Mammary epithelial cell (primary cell): ENCODE measurements at regions of chrX and their contacts with region 1.

Region 1: DNA sequence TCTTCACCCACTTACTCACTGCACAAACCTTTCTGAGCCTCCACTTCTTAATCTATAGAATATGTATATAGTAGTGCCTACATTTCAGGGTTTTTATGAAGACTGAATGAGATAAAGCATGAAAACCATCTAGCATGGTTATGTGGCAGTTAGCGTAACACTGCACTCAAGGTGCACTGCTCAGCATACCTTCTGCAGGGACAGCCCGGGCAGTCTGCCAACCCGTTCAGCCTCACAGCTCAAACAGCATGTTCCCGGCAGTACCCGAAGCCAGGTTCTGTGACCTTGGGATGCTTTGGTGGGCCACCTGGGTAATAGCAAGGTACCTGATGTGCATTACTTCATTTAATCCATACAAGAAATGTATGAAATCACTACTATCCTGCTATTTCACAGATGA is 81.4 kb downstream of the DOCK11 start:
- DNase-seq: no peak
- H3K4me3 ChIP-seq: no peak overlapping the region
- H3K27ac ChIP-seq: no peak overlapping the region
- H3K4me1 ChIP-seq: no peaks in the 10 kb centered on the region
- H3K27me3 ChIP-seq: no peaks in the 10 kb centered on the region
- CTCF ChIP-seq: no peak

Region 2: GRCh38 chrX:117919755-117920154 is 657.3 kb before region 1 on chrX:
- CTCF ChIA-PET with region 1: no interaction called
- dilution Hi-C with region 1: no loop called
- in situ Hi-C with region 1: no loop called
- intact Hi-C with region 1: no loop called
- DNase-seq: no peak
- H3K4me3 ChIP-seq: no peak overlapping the region
- H3K27ac ChIP-seq: no peak overlapping the region
- H3K4me1 ChIP-seq: no peaks in the 10 kb centered on the region
- H3K27me3 ChIP-seq: no peaks in the 10 kb centered on the region
- CTCF ChIP-seq: no peak

Region 3: DNA sequence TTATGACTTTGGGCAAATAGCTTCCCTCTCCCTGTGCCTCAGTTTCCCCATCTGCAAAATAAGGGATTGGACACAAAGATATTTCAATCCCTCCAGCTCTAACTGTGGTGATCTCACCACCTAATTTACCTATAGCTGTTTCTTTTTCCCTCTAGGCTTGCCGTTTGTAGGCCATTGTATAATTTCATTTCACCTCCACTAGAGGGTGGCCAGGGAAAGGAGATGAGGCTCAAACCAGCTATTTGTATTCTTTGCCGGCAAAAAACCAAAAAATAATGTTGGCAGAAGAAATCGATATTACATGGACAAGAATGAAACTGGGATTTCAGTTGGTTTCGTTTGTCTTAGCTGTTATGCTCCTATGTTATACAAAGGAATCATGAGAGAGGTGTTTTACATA is 117.5 kb before region 1 on chrX:
- CTCF ChIA-PET with region 1: no interaction called
- dilution Hi-C with region 1: no loop called
- in situ Hi-C with region 1: loop called in 1 of 2 experiments (anchors 25 kb)
- intact Hi-C with region 1: no loop called
- DNase-seq: peak; percentile 12
- H3K4me3 ChIP-seq: no peak overlapping the region
- H3K27ac ChIP-seq: no peak overlapping the region
- H3K4me1 ChIP-seq: no peaks in the 10 kb centered on the region
- H3K27me3 ChIP-seq: no peaks in the 10 kb centered on the region
- CTCF ChIP-seq: peak; percentile 48 to 60